ENCODE measurements at regions of chr14 and their contacts with region 1.

Region 1: GRCh38 chr14:75293920-75294642 is 15.5 kb downstream of the FOS start:
- DNase-seq: peak; percentile 87 to 99 (median 93)

Region 2: DNA sequence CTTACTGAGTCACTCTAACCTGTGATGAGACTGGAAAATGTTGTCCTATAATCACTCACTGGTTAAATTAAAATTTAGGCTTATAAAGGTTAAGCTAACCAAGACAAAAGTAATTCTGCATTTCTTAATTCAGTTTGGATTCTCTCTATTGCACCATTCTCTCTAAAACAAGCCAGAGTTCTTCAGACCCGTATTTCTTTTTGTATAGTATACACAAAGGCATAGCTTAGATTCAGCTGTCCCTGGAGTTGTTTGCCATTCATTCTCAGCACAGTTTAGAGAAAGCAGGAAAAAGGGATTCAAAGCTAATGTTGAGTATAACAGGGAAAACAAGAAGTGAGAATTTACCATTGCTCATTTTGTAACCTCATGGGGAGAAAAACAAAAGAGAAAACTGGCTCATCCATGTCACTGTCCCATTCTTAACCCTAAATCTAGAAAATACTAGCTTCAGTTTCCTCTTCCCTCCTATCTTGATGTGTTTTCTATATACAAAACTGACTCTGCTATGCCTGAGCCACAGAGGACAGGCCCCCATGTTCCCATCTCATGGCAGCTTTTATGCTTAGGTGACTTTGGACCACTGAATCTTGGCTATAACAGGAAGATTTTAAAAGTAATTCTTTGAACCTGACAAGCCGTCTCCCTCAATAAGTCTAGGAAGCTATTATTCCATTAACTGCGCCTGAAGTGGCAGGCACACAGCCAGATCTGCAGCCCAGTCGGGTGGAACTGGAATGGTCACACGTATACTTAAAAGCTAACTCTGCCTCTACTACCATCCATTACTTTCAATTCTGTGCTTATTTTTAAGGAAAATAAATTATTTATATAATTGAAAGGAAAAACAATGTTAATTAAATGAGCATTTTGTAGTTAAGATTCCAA is 588.2 kb before region 1 on chr14:
- intact Hi-C with region 1: no loop called
- DNase-seq: no peak

Region 3: DNA sequence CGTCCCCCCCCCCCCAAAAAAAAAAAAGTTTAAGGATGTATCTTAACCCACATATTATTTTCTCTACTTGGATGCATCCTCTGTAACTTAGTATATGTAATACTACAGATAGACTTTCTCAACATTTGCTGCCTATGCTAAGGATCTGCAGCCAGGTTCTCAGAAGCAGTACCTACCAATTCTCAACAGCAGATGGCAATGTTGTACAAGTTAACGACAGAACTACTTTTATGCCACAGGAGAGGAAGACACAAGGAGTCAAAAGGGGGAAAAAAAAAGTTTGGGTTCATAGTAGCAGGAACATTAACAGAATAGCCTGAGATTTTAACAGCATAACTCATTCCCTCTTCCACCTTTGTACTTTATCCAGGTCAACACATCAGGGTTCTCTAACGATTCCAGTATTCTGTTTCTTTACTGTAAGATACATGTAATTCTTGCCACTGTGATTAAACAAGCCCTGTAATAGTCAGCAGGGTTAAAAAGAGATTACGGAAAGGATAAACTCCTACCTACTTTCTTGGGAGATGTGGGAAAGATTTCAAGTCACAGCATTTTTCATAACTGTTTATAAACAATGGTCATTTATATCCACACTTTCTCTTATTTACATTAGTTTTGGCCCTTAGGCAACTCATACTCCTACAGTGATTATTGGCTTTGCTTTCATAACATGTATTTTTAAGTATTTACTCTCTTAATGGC is 161.5 kb before region 1 on chr14:
- intact Hi-C with region 1: loop called (anchors 1 kb)
- DNase-seq: peak in 2 of 10 donors; percentile 32 to 38

Region 4: GRCh38 chr14:75176142-75176820 is 117.8 kb before region 1 on chr14 and contains the start of gene TMED10:
- intact Hi-C with region 1: loop called (anchors 5 kb)
- DNase-seq: peak; percentile 85 to 98 (median 90)

Region 5: DNA sequence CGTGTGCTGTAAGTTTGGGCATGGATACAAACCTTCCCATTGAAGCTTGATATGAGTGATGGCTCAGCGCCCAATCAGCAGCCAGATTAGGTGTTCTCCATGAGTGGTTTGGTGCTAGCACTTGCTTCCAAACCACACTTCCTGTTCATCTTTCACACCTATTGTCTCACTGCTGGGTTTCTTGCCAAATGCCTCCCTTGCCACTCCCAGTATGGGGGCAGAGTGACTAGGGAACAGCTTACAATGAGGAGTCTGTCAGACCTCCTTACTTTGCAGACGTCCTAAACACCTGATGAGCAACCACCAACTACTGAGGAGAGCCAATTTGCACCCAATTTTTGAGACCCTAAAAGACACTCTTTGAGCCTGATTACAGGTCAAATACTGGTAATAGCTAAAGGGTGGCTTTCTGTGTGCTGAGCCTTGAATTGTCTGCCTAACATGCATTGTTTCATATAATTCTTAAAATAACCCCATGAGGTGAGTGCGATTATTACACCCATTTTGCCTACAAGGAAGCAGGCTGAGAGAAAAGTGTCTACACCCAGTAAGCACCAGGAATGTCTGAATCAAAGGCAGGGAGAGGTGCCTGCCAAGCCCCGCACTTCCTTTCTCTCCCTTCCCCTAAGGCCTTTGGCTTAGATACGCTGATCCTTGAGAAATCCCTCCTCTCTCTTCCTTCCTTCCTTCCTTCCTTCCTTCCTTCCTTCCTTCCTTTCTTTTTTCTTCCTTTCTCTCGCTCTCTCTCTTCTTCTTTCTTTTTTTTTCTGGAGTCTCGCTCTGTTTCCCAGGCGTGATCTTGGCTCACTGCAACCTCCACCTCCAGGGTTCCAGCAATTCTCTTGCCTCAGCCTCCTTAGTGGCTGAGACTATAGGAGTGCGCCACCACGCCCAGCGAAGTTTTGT is 63.7 kb before region 1 on chr14:
- intact Hi-C with region 1: loop called (anchors 10 kb)
- DNase-seq: no peak

Region 6: GRCh38 chr14:75258615-75259466 is 35.2 kb before region 1 on chr14:
- intact Hi-C with region 1: loop called (anchors 1 kb)
- DNase-seq: peak; percentile 95 to 100 (median 97)

Region 7: DNA sequence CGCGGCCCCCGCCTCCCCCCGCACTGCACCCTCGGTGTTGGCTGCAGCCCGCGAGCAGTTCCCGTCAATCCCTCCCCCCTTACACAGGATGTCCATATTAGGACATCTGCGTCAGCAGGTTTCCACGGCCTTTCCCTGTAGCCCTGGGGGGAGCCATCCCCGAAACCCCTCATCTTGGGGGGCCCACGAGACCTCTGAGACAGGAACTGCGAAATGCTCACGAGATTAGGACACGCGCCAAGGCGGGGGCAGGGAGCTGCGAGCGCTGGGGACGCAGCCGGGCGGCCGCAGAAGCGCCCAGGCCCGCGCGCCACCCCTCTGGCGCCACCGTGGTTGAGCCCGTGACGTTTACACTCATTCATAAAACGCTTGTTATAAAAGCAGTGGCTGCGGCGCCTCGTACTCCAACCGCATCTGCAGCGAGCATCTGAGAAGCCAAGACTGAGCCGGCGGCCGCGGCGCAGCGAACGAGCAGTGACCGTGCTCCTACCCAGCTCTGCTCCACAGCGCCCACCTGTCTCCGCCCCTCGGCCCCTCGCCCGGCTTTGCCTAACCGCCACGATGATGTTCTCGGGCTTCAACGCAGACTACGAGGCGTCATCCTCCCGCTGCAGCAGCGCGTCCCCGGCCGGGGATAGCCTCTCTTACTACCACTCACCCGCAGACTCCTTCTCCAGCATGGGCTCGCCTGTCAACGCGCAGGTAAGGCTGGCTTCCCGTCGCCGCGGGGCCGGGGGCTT is 15.5 kb before region 1 on chr14 and contains the start of gene FOS:
- intact Hi-C with region 1: loop called (anchors 2 kb)
- DNase-seq: peak; percentile 85 to 99 (median 90)

Region 8: DNA sequence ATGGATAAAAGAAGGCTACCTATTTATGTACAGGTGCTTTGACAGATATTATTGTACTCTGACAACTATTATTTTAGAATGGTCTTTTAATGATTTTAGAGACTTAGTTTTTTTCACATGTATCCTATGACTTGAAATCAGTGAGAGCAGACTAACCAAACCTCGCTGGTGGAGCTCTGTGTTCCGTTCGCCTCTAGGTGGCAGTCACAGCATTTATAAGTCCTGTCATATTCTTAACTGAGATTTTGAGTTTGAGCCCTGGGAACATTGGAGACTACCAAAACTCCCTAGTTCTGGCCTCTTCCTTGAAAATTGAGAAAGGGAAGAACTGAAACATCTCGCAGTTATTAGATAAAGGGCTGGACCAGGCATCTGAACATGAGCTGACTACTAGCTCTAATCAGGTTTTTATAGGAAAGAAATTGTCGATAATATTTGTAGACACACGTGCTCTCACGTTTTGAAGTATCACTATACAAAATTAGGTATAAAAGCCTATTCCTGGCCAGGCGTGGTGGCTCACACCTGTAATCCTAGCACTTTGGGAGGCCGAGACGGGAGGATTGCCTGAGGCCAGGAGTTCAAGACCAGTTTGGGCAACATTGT is 415.2 kb after region 1 on chr14:
- intact Hi-C with region 1: no loop called
- DNase-seq: peak; percentile 43 to 94 (median 76)